Activated CD4-positive, alpha-beta T cell treated with anti-CD3 and anti-CD28 coated beads for 36 hours (primary cell): ENCODE measurements at regions of chr19 and their contacts with region 1.

Region 1: GRCh38 chr19:383922-384798 is 24.8 kb downstream of the C2CD4C start:
- DNase-seq: no peak
- ATAC-seq: no peak
- H3K4me3 Mint-ChIP-seq: no peak overlapping the region
- H3K27ac Mint-ChIP-seq: peak overlapping the region; percentile 77
- H3K4me1 Mint-ChIP-seq: peaks cover 25% of the 10 kb centered on the region
- H3K27me3 Mint-ChIP-seq: peaks cover 33% of the 10 kb centered on the region

Region 2: DNA sequence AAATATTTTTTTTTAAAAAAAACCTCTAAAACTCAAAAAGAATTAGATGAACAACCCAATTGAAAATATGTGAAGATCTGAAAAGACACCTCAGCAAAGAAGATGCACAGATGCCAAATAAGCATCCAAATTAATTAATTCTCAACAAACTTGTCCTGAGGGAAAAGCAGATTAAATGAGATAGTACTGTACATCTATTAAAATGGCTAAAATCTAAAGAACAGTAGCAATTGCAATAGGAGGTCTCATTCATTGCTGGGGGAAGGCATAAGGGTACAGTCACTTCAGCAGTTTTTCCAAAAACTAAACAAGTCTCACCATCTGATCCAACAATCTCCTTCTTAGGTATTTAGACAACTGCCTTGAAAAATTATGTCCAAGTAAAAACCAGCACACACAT is 114.9 kb before region 1 on chr19:
- CTCF ChIA-PET with region 1: no interaction called
- POLR2A ChIA-PET with region 1: no interaction called
- intact Hi-C with region 1: no loop called
- DNase-seq: no peak
- ATAC-seq: no peak
- H3K4me3 Mint-ChIP-seq: no peak overlapping the region
- H3K27ac Mint-ChIP-seq: no peak overlapping the region
- H3K4me1 Mint-ChIP-seq: peaks cover 10% of the 10 kb centered on the region
- H3K27me3 Mint-ChIP-seq: peaks cover 50% of the 10 kb centered on the region

Region 3: GRCh38 chr19:344625-345319 is 39.4 kb before region 1 on chr19 and contains the start of gene MIER2:
- CTCF ChIA-PET with region 1: interaction called, 3 read pairs
- POLR2A ChIA-PET with region 1: no interaction called
- intact Hi-C with region 1: loop called in 1 of 2 experiments (anchors 2 kb)
- DNase-seq: peak; percentile 94
- ATAC-seq: peak; percentile 94
- H3K4me3 Mint-ChIP-seq: peak within 1 kb of the TSS; percentile 79
- H3K27ac Mint-ChIP-seq: peak within 1 kb of the TSS; percentile 77
- H3K4me1 Mint-ChIP-seq: peaks cover 44% of the 10 kb centered on the region
- H3K27me3 Mint-ChIP-seq: peaks cover 7% of the 10 kb centered on the region
- total RNA-seq, gene MIER2: 21.2 to 24.6 TPM

Region 4: GRCh38 chr19:488505-489417 is 104.6 kb after region 1 on chr19:
- CTCF ChIA-PET with region 1: no interaction called
- POLR2A ChIA-PET with region 1: no interaction called
- intact Hi-C with region 1: loop called (anchors 5 to 10 kb)
- DNase-seq: peak; percentile 93
- ATAC-seq: peak; percentile 91
- H3K4me3 Mint-ChIP-seq: peak overlapping the region; percentile 71
- H3K27ac Mint-ChIP-seq: peak overlapping the region; percentile 75
- H3K4me1 Mint-ChIP-seq: peaks cover 2% of the 10 kb centered on the region
- H3K27me3 Mint-ChIP-seq: peaks cover 10% of the 10 kb centered on the region